Heart left ventricle (tissue), 16 donors: ENCODE measurements at regions of chr10 and their contacts with region 1.

Region 1: DNA sequence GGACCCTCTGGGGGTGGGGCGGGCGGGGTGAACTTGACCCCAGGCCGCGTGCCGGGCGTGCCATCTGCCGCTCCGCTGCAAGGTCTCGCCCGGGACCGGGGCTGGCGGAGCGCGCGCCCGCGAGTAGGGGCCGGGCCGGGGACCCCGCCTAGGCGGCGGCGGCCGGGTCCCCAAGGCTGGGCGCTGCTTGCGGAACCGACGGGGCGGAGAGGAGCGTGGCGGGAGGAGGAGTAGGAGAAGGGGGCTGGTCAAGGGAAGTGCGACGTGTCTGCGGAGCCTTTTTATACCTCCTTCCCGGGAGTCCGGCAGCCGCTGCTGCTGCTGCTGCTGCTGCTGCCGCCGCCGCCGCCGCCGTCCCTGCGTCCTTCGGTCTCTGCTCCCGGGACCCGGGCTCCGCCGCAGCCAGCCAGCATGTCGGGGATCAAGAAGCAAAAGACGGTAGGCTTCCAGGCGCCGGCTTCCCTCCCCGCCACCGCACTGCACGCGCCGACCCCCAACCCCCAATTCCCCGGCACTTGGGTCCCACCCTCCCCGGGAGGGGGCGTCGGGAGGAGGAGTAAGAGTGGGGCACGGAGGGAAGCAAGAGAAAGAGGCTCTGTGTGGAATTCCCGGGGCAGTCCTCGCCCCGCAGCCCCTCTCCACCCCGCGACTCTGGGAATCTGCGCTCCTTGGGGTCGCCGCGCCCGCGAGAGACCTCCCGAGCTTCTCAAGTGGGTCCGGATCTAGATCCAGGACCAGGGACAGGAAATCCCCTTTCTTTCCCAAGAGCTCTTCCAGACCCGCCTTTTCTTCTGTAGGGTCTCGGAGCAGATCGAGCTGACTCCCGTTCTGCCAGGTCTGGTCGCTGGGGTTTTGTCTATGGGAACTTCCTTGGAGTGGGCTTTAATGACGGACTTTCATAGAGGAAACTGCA is at the start of gene PAPSS2:
- DNase-seq: peak; percentile 70 to 86 (median 77)
- ATAC-seq: peak; percentile 75 to 92 (median 86)
- H3K4me3 ChIP-seq: peak within 1 kb of the TSS; percentile 53 to 92 (median 84)
- H3K27ac ChIP-seq: peak within 1 kb of the TSS; percentile 50 to 85 (median 74)
- H3K4me1 ChIP-seq: peaks cover 0 to 34% (median 5%) of the 10 kb centered on the region in 12 donors
- H3K27me3 ChIP-seq: no peaks in the 10 kb centered on the region
- CTCF ChIP-seq: peak in 4 of 12 donors; percentile 6 to 18 (median 11)
- POLR2A ChIP-seq: peak in 1 of 2 donors; percentile 56
- total RNA-seq, gene PAPSS2: 3.1 to 32.6 (median 9.0) TPM

Region 2: DNA sequence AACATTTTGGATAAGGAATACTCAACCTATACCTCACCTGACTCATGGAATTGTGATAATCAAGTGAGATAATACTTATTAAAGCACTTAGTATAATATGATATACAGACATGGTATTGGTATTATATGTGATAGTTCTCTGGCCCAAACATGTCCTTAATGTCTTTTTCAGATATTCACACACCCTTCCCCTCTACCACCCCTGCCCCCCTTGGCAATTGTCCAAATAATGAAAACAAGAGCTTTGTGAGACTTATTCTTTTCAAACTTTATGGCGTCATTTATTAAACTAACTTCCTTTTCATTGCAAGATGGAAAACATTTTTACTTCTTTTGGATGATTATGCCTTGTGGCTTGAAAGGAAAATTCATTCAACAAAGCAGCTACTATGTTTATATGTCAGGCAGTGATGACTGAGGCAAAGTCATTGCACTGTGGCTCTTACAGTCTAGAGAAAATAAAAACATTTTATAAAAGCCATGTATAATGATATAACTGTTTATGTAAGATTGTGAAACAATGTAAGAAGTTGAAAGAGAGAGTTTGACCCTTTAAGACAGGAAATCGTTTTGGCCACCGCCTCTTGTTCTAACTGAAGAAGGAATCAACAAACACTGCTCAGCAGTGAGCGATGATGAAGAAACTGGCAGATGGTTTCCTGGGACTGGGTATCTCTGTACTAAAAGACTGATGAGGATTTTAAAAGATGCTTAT is 127.8 kb before region 1 on chr10:
- intact Hi-C with region 1: loop called in 3 of 10 experiments (anchors 5 to 10 kb)
- DNase-seq: peak in 2 of 5 donors; percentile 12 to 31
- ATAC-seq: peak; percentile 50 to 79 (median 70)
- H3K4me3 ChIP-seq: peak overlapping the region in 6 of 12 donors; percentile 1 to 12 (median 4)
- H3K27ac ChIP-seq: peak overlapping the region; percentile 34 to 67 (median 58)
- H3K4me1 ChIP-seq: peaks cover 0 to 25% (median 12%) of the 10 kb centered on the region in 12 donors
- H3K27me3 ChIP-seq: no peaks in the 10 kb centered on the region
- CTCF ChIP-seq: no peak
- POLR2A ChIP-seq: no peak

Region 3: DNA sequence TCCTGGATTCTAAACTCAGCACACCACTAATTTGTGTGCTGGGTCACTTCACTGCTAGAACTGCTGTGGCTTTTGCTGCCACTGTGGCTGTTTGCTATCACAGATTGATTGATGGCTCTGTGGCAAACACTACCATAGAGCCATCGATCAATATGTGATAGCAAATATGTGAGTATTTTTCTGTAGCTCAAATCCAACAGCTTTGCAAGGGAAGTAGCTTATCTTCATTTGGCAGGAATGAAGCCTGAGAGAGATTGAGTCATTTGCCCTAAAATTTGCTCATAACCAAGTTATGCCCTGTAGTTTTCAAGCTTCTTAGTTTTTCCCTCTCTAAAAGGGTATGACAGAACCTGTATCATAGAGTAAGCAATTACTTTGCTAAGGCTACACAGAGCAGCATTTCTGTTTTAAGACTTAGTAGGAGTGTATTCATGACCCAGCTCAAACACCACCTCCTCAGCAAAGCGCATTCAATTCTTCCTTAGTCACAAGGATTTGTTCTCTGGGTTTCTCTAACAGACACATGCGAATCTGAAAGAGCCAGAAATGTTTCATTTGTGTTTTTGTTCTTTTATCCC is 112.0 kb before region 1 on chr10:
- intact Hi-C with region 1: loop called in 2 of 10 experiments (anchors 10 kb)
- DNase-seq: no peak
- ATAC-seq: no peak
- H3K4me3 ChIP-seq: no peak overlapping the region
- H3K27ac ChIP-seq: peak overlapping the region in 1 of 12 donors; percentile 43
- H3K4me1 ChIP-seq: peaks cover 0 to 38% (median 4%) of the 10 kb centered on the region in 12 donors
- H3K27me3 ChIP-seq: no peaks in the 10 kb centered on the region
- CTCF ChIP-seq: no peak
- POLR2A ChIP-seq: no peak

Region 4: DNA sequence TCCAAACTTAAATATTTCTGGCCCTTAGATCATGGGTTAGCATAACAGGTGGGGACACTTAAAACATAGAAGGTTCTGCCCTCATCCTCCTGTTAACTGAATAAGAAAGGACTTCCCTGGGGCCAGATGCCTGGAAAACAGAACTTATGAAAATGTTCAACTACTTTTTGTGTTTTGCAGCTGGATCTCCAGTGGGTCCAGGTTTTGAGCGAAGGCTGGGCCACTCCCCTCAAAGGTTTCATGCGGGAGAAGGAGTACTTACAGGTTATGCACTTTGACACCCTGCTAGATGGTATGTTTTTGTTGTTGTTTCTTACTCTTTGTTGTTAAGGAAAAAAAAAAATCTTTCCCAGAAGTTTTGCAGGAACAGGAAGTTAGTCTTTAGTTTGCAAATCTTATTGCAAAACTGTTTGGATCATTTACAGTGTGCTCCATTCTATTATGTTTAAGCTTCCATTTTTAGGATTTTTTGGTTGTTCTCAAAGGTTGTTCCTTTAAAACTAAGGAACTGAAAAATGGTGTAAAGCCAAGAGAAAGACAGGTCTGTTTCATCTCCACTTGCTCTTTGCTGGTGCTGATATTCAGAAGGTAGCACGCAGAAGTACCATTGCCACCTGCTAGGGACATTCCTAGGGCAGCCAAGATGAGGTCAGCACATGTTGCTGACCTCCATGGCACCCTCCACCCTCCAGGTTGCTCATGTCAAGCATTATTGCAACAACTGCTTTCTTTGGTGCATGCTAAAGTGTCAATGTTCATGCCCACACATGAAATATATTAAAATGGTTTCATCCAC is 55.9 kb after region 1 on chr10:
- intact Hi-C with region 1: loop called in 2 of 10 experiments (anchors 5 kb)
- DNase-seq: no peak
- ATAC-seq: peak in 3 of 4 donors; percentile 12 to 38 (median 25)
- H3K4me3 ChIP-seq: no peak overlapping the region
- H3K27ac ChIP-seq: peak overlapping the region; percentile 11 to 76 (median 52)
- H3K4me1 ChIP-seq: peaks cover 0 to 35% (median 15%) of the 10 kb centered on the region in 12 donors
- H3K27me3 ChIP-seq: no peaks in the 10 kb centered on the region
- CTCF ChIP-seq: no peak
- POLR2A ChIP-seq: no peak

Region 5: DNA sequence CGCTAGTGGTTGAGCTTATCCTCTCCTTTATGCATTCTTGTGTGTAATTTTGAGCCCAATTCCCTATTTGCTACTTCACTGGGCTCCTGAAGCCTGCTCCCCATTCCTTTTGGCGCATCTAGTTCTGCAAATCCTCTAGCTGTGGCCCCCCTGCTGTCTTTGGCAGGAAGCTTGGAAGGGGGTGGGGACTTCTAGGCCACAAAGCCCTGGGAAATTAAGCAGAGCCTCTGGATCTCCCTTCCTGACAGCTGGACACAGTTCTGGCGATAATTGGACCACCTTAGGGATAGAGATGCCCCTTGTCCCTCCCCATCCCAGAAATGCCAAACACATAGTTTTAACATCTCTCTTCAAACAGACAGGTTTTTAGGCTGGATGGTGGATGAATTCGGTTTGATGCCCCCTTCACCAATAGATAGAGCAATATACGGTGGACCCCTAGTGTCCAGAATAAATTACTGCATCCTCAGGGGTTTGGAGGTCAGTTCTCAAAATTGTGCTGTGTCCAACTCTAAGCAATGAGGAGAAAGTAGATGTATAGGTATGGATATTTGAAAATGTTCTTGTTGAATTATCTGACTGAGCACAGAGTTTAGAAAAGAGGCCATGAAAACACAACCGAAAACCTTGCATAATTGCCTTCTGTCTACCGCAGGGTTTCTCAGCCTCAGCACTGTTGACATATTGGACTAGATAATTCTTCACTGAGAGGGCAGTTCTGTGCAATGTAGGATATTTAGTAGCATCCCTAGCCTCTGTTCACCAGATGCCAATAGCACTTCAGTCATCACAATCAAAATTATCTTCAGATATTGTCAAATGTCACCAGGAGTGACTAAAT is 75.4 kb after region 1 on chr10:
- intact Hi-C with region 1: loop called (anchors 1 to 2 kb)
- DNase-seq: peak in 3 of 5 donors; percentile 25 to 40 (median 34)
- ATAC-seq: peak; percentile 68 to 87 (median 82)
- H3K4me3 ChIP-seq: no peak overlapping the region
- H3K27ac ChIP-seq: no peak overlapping the region
- H3K4me1 ChIP-seq: peaks cover 0 to 21% (median 6%) of the 10 kb centered on the region in 12 donors
- H3K27me3 ChIP-seq: no peaks in the 10 kb centered on the region
- CTCF ChIP-seq: peak; percentile 59 to 86 (median 82)
- POLR2A ChIP-seq: no peak

Region 6: DNA sequence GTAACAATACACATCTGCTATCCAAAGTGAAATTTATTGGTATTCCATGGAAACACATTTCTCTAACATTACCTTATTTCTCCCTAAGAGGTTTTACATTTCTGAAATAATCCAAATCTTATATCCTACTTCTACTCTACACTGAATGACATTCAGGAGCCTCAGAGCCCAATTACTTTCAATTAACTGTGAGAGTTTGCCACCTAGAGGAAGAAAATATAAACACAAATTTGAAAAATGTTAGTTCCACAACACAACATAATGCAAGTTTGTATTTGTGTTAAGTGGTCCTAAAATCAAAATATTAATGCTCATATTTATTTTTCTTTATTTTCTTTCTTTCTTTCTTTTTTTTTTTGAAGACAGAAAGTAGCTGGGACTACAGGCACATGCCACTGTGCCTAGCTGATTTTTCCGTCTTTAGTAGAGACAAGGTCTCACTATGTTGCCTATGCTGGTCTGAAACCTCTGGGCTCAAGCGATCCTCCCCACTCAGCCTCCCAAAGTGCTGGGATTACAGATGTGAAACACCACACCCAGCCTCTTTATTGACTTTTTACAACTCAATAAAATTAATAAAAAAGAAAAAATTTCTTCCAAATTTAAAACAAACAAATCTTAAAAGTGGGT is 112.2 kb after region 1 on chr10:
- intact Hi-C with region 1: loop called in 2 of 10 experiments (anchors 1 to 10 kb)
- DNase-seq: no peak
- ATAC-seq: peak in 1 of 4 donors; percentile 30
- H3K4me3 ChIP-seq: no peak overlapping the region
- H3K27ac ChIP-seq: no peak overlapping the region
- H3K4me1 ChIP-seq: peaks cover 0 to 12% (median 0%) of the 10 kb centered on the region in 12 donors
- H3K27me3 ChIP-seq: no peaks in the 10 kb centered on the region
- CTCF ChIP-seq: peak; percentile 42 to 67 (median 54)
- POLR2A ChIP-seq: no peak

Region 7: DNA sequence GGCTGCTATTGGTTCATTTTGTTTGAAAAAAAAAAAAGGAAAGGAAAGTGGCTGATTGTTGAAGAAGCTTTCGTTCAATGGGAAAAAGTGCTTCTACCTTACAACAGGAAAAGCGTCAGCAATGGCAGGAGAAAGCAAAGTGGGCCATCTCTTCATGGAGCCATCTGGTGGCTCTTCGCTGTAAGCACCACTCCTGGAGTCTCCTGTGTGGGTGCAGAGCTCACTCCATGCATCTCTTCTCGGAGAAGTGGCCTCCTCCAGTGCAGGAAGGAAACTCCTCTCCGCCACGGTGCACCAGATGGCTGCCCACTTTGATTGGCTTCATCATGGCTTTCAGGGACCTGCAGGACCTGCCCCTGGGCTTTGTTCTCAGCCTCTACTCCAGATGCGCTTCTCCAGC is 454.5 kb after region 1 on chr10:
- intact Hi-C with region 1: loop called in 1 of 10 experiments (anchors 10 kb)
- DNase-seq: peak; percentile 34 to 60 (median 48)
- ATAC-seq: peak; percentile 47 to 90 (median 78)
- H3K4me3 ChIP-seq: no peak overlapping the region
- H3K27ac ChIP-seq: no peak overlapping the region
- H3K4me1 ChIP-seq: peaks cover 0 to 69% (median 3%) of the 10 kb centered on the region in 12 donors
- H3K27me3 ChIP-seq: no peaks in the 10 kb centered on the region
- CTCF ChIP-seq: peak; percentile 48 to 76 (median 66)
- POLR2A ChIP-seq: no peak